B cell (primary cell): ENCODE measurements at regions of chr11 and their contacts with region 1.

Region 1: DNA sequence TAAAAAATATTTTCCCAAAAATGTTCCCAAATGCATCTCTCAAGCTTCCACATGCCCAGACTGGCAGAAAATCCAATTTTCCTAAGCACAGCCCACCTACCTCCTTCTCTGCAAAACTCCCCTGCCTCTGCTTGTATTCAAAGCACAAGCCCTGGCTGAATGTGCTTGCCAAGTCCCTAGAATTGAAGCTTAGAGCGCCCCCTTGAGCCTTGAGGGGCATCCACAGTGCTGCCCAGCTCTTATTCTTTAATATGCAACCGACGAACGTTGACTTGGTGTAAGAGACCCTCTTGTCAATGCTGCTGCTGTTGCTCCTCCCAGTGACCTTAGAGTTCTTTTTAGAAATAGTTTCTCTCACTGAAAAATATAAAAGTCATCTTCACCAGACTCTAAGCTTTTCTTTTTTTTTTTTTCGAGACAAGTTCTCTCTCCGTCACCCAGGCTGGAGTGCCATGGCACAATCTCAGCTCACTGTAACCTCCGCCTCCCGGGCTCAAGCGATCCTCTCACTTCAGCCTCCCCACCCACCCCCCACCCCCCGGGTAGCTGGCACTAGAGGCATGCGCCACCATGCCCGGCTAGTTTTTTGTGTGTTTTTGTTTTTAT is 63.5 kb upstream of the CAPRIN1 start:
- DNase-seq: peak; percentile 83
- ATAC-seq: peak; percentile 84
- H3K4me3 ChIP-seq: no peak overlapping the region
- H3K4me3 Mint-ChIP-seq: no peak overlapping the region
- H3K27ac ChIP-seq: no peak overlapping the region
- H3K27ac Mint-ChIP-seq: no peak overlapping the region
- H3K4me1 ChIP-seq: no peaks in the 10 kb centered on the region
- H3K4me1 Mint-ChIP-seq: no peaks in the 10 kb centered on the region
- H3K27me3 ChIP-seq: peaks cover 0 to 5% (median 0%) of the 10 kb centered on the region in 4 experiments
- H3K27me3 Mint-ChIP-seq: no peaks in the 10 kb centered on the region
- CTCF ChIP-seq: peak; percentile 86

Region 2: GRCh38 chr11:33829433-33830141 is 158.5 kb before region 1 on chr11:
- CTCF ChIA-PET with region 1: interaction called, 22 read pairs
- POLR2A ChIA-PET with region 1: no interaction called
- intact Hi-C with region 1: loop called (anchors 2 kb)
- DNase-seq: peak; percentile 73
- ATAC-seq: peak; percentile 76
- H3K4me3 ChIP-seq: peak overlapping the region in 3 of 5 experiments; percentile 28 to 48 (median 32)
- H3K4me3 Mint-ChIP-seq: peak overlapping the region; percentile 86
- H3K27ac ChIP-seq: no peak overlapping the region
- H3K27ac Mint-ChIP-seq: no peak overlapping the region
- H3K4me1 ChIP-seq: peaks cover 10 to 14% of the 10 kb centered on the region in 2 donors
- H3K4me1 Mint-ChIP-seq: peaks cover 8% of the 10 kb centered on the region
- H3K27me3 ChIP-seq: peaks cover 0 to 39% (median 36%) of the 10 kb centered on the region in 4 experiments
- H3K27me3 Mint-ChIP-seq: peaks cover 49% of the 10 kb centered on the region
- CTCF ChIP-seq: peak; percentile 77

Region 3: GRCh38 chr11:33847251-33847650 is 140.8 kb before region 1 on chr11:
- CTCF ChIA-PET with region 1: interaction called, 13 read pairs
- POLR2A ChIA-PET with region 1: no interaction called
- intact Hi-C with region 1: no loop called
- DNase-seq: no peak
- ATAC-seq: no peak
- H3K4me3 ChIP-seq: no peak overlapping the region
- H3K4me3 Mint-ChIP-seq: no peak overlapping the region
- H3K27ac ChIP-seq: no peak overlapping the region
- H3K27ac Mint-ChIP-seq: no peak overlapping the region
- H3K4me1 ChIP-seq: no peaks in the 10 kb centered on the region
- H3K4me1 Mint-ChIP-seq: no peaks in the 10 kb centered on the region
- H3K27me3 ChIP-seq: no peaks in the 10 kb centered on the region
- H3K27me3 Mint-ChIP-seq: peaks cover 12% of the 10 kb centered on the region
- CTCF ChIP-seq: no peak

Region 4: DNA sequence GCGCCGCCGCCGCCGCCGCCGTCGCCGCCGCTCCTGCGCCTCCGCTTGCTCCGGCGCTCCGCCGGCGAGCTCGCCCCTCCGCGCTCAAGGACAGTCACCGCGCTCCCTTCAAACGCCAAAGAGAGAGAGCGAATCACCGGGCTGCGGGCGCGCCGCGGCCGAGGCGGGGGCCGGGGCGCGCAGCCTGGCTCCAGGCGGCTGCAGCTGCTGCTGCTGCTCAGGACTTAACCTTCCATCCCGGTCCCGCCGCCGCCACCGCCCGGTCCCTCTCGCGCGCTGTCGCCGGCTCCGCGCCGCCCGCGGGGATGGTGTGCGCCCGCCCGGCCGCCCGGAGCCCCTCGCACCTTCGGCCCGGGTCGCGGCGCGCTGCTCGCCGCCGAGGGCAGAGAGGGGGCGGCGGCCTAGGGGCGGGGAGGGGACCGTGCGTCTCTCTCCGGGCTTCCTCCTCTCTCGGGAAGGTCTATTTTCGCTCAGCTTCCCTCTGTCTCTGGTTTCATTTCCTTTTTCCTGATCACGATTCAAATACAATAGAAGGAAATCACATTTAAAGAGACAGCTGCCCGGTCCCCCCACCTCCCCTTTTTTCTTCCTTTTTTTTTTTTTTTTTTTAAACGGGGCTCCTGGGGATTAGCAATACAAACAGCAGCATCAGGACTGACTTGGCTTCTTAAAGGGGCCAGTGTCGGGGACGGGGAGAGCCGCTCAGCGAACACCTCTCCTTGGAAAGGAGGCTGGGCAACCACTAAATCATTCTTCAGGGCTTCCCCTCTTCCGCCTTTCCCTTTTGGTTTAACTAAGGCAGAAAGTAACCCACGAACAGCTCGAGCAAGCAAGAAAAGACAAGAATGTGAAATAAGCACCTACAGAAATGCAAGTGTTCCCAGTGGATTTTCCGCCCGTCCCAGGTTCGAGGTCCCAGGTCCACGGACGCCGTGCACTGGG is 118.3 kb before region 1 on chr11:
- CTCF ChIA-PET with region 1: interaction called, 19 read pairs
- POLR2A ChIA-PET with region 1: no interaction called
- intact Hi-C with region 1: no loop called
- DNase-seq: peak; percentile 75
- ATAC-seq: peak; percentile 72
- H3K4me3 ChIP-seq: peak overlapping the region; percentile 64 to 86 (median 82)
- H3K4me3 Mint-ChIP-seq: peak overlapping the region; percentile 98
- H3K27ac ChIP-seq: no peak overlapping the region
- H3K27ac Mint-ChIP-seq: peak overlapping the region; percentile 83
- H3K4me1 ChIP-seq: peaks cover 26 to 30% of the 10 kb centered on the region in 2 donors
- H3K4me1 Mint-ChIP-seq: peaks cover 32% of the 10 kb centered on the region
- H3K27me3 ChIP-seq: peaks cover 0 to 7% (median 0%) of the 10 kb centered on the region in 4 experiments
- H3K27me3 Mint-ChIP-seq: peaks cover 3% of the 10 kb centered on the region
- CTCF ChIP-seq: no peak